GM18951 (cell line): ENCODE measurements at regions of chr11 and their contacts with region 1.

Region 1: DNA sequence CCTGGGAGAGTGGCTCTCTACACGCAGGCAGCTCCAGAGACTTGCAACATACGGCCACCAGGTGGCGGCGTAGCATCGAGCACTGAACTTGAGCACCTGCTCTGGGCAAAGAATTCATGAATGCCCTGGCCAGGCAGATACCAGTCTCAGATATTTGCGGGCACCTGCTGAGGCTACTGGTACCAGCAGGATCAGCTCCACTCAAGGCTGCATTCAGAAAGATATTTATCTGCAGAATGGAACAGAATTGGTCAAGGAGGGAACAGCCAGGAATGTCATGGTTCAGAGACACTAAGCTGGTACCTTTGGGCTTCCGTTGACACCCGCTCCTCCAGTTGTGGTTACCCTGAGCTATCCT is 10.8 kb upstream of the CCDC86 start:
- POLR2A ChIP-seq: no peak

Region 2: DNA sequence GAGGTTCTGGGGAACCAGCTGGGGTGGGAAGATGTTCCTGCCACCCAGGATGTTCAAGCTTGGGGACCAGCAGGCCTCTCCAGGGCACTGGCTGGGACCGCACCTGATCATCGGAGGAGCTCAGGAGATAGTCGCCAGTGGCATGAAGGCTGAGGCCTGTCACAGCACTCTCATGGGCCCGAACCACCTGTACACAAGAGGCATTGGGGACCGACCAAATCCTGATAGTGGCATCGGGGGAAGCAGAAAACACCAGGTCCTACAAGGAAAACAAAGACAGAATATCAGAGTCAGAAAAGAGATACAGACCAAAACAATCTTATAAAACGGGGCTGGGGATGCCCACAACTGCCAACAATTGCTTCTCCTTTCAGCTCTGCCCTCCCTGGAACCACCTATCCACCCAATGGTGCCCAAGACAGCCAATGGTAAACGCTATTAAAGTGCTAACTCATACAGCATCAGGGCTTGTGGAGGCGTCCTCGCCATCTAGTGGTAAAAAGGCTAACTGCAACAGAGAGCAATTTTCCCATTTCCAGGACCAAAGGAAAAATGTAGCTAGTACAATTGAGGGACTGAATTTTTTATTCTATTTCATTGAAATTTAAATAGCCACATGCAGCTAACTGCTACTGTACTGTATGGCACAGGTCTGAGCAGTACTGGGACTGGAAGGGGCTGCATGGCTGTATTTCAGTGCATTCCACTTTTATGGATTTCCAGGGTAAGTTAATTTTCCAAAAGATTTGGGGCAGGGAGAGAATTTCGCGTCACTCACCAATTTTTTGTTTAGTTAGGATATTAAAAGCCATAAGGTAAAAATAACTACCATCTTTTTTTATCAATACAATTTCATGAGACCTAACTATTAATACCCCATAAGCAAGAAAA is 68.2 kb after region 1 on chr11:
- in situ Hi-C with region 1: loop called (anchors 5 kb)
- POLR2A ChIP-seq: no peak

Region 3: DNA sequence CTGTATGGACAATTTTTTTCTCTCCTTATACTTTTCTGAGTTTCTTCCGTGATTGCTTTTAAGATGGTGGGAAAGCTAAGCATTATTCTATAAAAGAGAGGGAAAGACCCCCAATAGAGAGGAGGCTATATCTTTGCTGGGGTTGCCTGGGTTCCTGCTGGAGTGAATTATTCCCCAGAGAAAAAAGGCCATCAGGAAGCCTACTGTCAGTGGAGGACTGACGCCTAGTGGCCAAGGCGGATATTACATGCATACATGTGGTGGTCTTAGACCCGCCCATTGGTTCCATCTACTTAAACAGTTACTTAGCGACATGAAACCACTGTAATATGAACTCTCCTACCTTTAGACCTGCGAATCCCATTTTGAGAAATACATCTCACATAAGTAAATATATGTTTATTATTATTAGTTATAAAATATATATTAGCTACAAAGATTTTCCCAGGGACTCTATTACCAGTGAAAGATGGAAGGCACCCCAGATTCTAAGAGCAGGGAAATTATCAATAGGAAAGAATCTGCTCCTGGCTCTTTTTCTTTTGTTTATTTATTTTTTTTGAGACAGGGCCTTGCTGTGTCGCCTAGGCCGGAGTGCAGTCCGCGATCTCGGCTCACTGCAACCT is 356.5 kb after region 1 on chr11:
- in situ Hi-C with region 1: loop called (anchors 10 kb)
- POLR2A ChIP-seq: no peak

Region 4: DNA sequence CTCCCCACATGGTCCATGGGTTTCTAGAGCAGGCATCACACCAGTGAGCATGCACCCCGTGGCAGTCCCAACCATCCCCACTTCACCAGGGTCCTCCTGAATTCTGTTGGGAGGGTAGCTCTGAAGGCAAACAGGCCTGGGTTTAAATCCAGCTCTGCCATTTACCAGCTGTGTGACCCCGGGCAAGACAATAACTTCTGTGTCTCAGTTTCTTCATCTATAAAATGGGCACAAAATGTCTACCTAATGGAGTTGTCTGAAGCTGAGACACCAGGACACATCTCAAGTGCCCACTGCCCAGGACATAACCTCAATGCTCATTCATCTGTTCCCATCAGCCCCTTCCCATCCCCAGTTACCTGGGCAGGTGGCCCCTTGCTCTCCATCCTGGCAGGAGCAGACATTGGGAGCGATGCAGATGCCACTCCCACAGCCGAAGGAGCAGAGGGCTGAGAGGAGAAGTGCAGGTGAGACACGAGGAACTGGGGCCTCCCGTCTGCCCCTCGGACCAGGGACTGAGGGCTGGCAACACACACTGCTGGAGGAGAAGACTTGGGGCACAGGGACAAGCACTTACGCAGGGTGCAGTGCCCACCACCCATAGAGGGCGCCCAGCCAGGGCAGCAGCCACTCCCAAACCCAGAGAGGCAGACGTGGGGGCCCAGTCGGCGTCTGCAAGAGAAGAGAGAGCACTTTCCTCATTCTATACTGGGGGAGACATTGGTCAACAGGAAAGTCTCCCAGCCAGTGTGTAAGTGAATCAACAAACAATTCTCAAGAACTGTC is 460.0 kb after region 1 on chr11:
- in situ Hi-C with region 1: no loop called
- POLR2A ChIP-seq: no peak